ENCODE measurements at regions of chr11 and their contacts with region 1.

Region 1: GRCh38 chr11:36409152-36409816 is 100.8 kb downstream of the TRAF6 start:
- DNase-seq: peak in 5 of 9 donors; percentile 2 to 38 (median 5)
- ATAC-seq: peak; percentile 20
- H3K4me3 ChIP-seq: peak overlapping the region; percentile 0
- H3K4me3 Mint-ChIP-seq: peak overlapping the region; percentile 24 to 82 (median 51)
- H3K27ac ChIP-seq: no peak overlapping the region
- H3K27ac Mint-ChIP-seq: peak overlapping the region in 8 of 9 donors; percentile 4 to 85 (median 56)
- H3K4me1 ChIP-seq: peaks cover 13 to 47% of the 10 kb centered on the region in 2 donors
- H3K4me1 Mint-ChIP-seq: peaks cover 20 to 76% (median 40%) of the 10 kb centered on the region in 7 donors
- H3K27me3 ChIP-seq: no peaks in the 10 kb centered on the region
- H3K27me3 Mint-ChIP-seq: no peaks in the 10 kb centered on the region

Region 2: GRCh38 chr11:36376888-36377758 is 32.2 kb before region 1 on chr11:
- CTCF ChIA-PET with region 1: no interaction called
- POLR2A ChIA-PET with region 1: no interaction called
- intact Hi-C with region 1: loop called in 1 of 2 experiments (anchors 1 kb)
- DNase-seq: peak in 3 of 9 donors; percentile 12 to 76 (median 26)
- ATAC-seq: peak; percentile 81
- H3K4me3 ChIP-seq: peak overlapping the region; percentile 71
- H3K4me3 Mint-ChIP-seq: peak overlapping the region; percentile 52 to 98 (median 74)
- H3K27ac ChIP-seq: no peak overlapping the region
- H3K27ac Mint-ChIP-seq: peak overlapping the region in 2 of 9 donors; percentile 41 to 85
- H3K4me1 ChIP-seq: peaks cover 0 to 19% of the 10 kb centered on the region in 2 donors
- H3K4me1 Mint-ChIP-seq: peaks cover 6 to 49% (median 22%) of the 10 kb centered on the region in 7 donors
- H3K27me3 ChIP-seq: peaks cover 0 to 5% of the 10 kb centered on the region in 2 donors
- H3K27me3 Mint-ChIP-seq: peaks cover 37 to 67% (median 65%) of the 10 kb centered on the region in 5 donors

Region 3: DNA sequence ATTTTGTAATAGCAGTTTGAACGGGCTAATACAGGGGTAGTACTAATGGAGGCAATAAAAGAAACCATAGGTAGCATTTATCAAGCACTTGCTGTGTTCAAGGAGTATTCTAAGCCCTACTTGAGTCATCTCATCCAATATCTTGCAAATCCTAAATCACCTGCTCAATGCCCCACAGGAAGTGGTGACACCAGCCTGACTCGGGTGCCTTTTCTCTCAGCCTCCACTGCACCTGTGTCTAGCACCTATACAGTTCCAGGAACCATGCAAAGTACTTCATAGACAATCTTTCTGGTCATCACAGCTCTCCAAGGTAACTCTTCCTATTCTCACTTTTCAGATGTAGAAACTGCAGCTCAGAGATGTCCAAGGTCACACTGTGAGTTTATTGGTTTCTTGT is 15.2 kb before region 1 on chr11:
- CTCF ChIA-PET with region 1: no interaction called
- POLR2A ChIA-PET with region 1: no interaction called
- intact Hi-C with region 1: loop called in 1 of 2 experiments (anchors 2 kb)
- DNase-seq: no peak
- ATAC-seq: no peak
- H3K4me3 ChIP-seq: no peak overlapping the region
- H3K4me3 Mint-ChIP-seq: peak overlapping the region in 1 of 10 donors; percentile 10
- H3K27ac ChIP-seq: no peak overlapping the region
- H3K27ac Mint-ChIP-seq: no peak overlapping the region
- H3K4me1 ChIP-seq: peaks cover 0 to 65% of the 10 kb centered on the region in 2 donors
- H3K4me1 Mint-ChIP-seq: peaks cover 0 to 57% (median 7%) of the 10 kb centered on the region in 7 donors
- H3K27me3 ChIP-seq: no peaks in the 10 kb centered on the region
- H3K27me3 Mint-ChIP-seq: peaks cover 0 to 23% (median 10%) of the 10 kb centered on the region in 5 donors

Region 4: DNA sequence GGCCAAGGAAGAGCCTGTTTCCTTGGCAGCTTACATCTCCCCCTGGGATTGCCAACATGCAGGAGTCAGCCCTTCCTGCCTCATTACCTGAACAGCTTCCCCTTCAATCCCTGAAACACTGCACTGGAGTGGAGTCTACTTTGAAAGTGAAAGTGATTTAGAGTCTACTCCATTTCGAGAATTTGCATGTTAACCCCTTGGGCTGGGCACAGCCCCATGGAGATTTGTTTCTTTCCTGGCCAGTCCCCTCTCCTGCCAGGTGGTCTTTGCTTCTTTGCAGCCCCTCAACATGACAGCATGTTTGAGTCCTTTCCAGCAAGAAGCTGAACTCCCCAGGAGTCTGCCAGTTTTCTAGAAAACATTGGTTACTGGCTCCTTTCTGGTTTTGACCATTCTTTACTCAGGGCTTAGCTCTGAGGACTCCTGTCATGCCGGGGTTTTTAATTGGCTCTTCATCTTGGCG is 40.9 kb after region 1 on chr11:
- CTCF ChIA-PET with region 1: no interaction called
- POLR2A ChIA-PET with region 1: no interaction called
- intact Hi-C with region 1: loop called in 1 of 2 experiments (anchors 5 kb)
- DNase-seq: peak in 3 of 9 donors; percentile 4 to 11 (median 7)
- ATAC-seq: no peak
- H3K4me3 ChIP-seq: peak overlapping the region; percentile 56
- H3K4me3 Mint-ChIP-seq: peak overlapping the region; percentile 58 to 89 (median 79)
- H3K27ac ChIP-seq: no peak overlapping the region
- H3K27ac Mint-ChIP-seq: peak overlapping the region in 7 of 9 donors; percentile 7 to 87 (median 51)
- H3K4me1 ChIP-seq: peaks cover 28 to 41% of the 10 kb centered on the region in 2 donors
- H3K4me1 Mint-ChIP-seq: peaks cover 24 to 49% (median 42%) of the 10 kb centered on the region in 7 donors
- H3K27me3 ChIP-seq: no peaks in the 10 kb centered on the region
- H3K27me3 Mint-ChIP-seq: no peaks in the 10 kb centered on the region